ENCODE measurements at regions of chr3 and their contacts with region 1.

Region 1: GRCh38 chr3:44252332-44252959 is 10.8 kb downstream of the TOPAZ1 start:
- DNase-seq: no peak
- H3K4me3 Mint-ChIP-seq: no peak overlapping the region
- H3K27ac Mint-ChIP-seq: no peak overlapping the region
- H3K4me1 Mint-ChIP-seq: no peaks in the 10 kb centered on the region
- H3K27me3 Mint-ChIP-seq: no peaks in the 10 kb centered on the region
- CTCF ChIP-seq: no peak

Region 2: GRCh38 chr3:44235604-44236484 is 16.6 kb before region 1 on chr3:
- CTCF ChIA-PET with region 1: interaction called, 10 read pairs
- POLR2A ChIA-PET with region 1: no interaction called
- intact Hi-C with region 1: no loop called
- DNase-seq: peak; percentile 88
- H3K4me3 Mint-ChIP-seq: no peak overlapping the region
- H3K27ac Mint-ChIP-seq: no peak overlapping the region
- H3K4me1 Mint-ChIP-seq: peaks cover 6% of the 10 kb centered on the region
- H3K27me3 Mint-ChIP-seq: no peaks in the 10 kb centered on the region
- CTCF ChIP-seq: peak; percentile 51

Measured in MCF 10A (cell line).